ENCODE measurements at regions of chr17 and their contacts with region 1.

Region 1: DNA sequence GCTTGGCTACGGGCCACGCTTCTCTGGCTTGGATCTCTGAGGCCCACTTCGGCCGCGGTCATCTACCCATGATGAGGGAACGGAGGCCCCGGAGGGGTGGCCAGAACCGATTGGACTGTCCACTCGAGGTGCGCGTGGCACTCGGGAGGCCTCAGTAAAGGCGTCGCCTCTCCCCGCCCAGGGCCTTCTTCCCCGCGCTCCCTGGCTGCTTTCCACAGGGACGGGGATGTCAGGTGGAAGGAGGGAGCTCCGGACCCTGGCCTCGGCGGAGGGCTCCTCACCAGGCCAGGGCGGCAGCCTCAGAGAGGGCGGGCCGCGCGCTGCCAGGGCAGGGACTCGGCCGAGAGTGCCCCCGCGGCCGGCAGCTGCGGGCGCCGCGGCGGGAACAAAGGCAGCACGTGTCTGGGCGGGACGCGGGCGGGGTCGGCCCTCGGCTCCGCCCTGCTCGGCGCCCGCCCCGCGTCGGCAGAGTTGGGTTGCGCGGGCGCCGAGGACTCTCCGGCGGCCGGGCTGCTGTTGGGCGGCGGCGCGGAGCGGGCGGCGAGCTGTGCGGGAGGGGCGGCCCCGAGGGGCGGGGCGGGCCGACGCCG is 587 bp upstream of the CDK5R1 start:
- DNase-seq: peak; percentile 62
- ATAC-seq: peak; percentile 80
- H3K4me3 Mint-ChIP-seq: peak overlapping the region; percentile 62
- H3K27ac Mint-ChIP-seq: peak overlapping the region; percentile 39
- H3K4me1 Mint-ChIP-seq: peaks cover 42% of the 10 kb centered on the region
- H3K27me3 Mint-ChIP-seq: no peaks in the 10 kb centered on the region

Region 2: GRCh38 chr17:32470405-32471167 is 15.6 kb before region 1 on chr17:
- CTCF ChIA-PET with region 1: interaction called, 12 read pairs
- POLR2A ChIA-PET with region 1: interaction called, 3 read pairs
- DNase-seq: no peak
- ATAC-seq: no peak
- H3K4me3 Mint-ChIP-seq: no peak overlapping the region
- H3K27ac Mint-ChIP-seq: no peak overlapping the region
- H3K4me1 Mint-ChIP-seq: no peaks in the 10 kb centered on the region
- H3K27me3 Mint-ChIP-seq: no peaks in the 10 kb centered on the region

Region 3: DNA sequence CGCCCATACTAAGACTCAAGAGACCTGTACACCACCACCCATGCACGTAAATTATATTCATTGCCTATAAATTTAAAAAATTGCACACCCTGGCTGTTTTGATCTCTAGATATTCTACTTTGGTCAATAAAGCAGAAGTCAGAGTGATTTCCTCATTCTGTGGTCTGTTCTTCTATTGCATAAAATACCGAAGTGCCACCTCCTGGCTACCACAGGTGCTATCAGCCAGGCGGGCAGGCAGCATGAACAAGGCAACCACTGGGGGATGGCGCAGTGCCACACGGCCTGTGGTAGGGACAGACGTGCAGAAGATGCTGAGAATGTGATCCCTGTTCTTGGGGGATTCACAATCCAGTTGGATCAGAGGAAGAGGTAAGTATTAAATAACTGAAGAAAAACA is 122.9 kb after region 1 on chr17:
- CTCF ChIA-PET with region 1: interaction called, 35 read pairs
- POLR2A ChIA-PET with region 1: interaction called, 4 read pairs
- DNase-seq: peak; percentile 83
- ATAC-seq: peak; percentile 100
- H3K4me3 Mint-ChIP-seq: no peak overlapping the region
- H3K27ac Mint-ChIP-seq: no peak overlapping the region
- H3K4me1 Mint-ChIP-seq: peaks cover 8% of the 10 kb centered on the region
- H3K27me3 Mint-ChIP-seq: no peaks in the 10 kb centered on the region

Measured in activated CD8-positive, alpha-beta T cell treated with anti-CD3 and anti-CD28 coated beads, Interleukin-2, amount 10 ng/mL, durations not matched to agents 7 days and 5 days (primary cell).